Common myeloid progenitor, CD34-positive (primary cell): ENCODE measurements at regions of chr17 and their contacts with region 1.

Region 1: GRCh38 chr17:40559954-40560591 is 5.2 kb downstream of the CCR7 start:
- DNase-seq: peak; percentile 71 to 85 (median 83)
- H3K4me3 ChIP-seq: peak overlapping the region in 3 of 7 experiments; percentile 16 to 57 (median 19)
- H3K27ac ChIP-seq: no peak overlapping the region
- H3K4me1 ChIP-seq: peaks cover 11 to 72% (median 59%) of the 10 kb centered on the region in 4 experiments
- H3K27me3 ChIP-seq: peaks cover 0 to 4% (median 0%) of the 10 kb centered on the region in 5 experiments

Region 2: DNA sequence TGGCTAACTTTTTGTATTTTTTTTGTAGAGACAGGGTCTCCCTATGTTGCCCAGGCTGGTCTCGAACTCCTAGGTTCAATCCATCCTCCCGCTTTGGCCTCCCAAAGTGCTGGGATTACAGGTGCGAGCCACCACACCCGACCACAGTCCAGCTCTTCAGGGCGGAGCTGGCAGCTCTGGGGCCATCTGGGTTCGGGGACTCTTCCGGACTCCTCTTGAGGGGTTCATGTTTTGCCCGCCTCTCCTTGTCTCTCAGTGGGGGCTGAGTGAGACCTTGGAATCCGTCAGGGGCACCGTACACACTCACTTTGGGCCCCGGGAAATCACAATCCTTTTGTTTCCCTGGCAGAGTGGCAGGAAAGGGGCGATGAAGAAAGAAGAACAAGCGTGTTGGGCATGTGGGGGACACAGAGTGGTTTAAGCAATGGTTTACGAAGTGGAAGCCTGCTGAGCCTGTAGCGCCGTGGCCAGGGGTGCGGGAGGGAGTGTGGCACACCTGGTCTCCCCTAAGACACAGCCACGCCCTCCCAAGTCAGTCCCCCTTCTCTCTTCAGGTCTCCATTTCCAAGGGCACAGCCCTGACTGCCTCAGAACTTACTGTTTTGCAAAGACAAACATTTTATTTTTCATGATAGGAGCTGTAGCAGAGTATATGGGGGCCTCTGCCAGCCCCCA is 84.7 kb before region 1 on chr17:
- CTCF ChIA-PET with region 1: interaction called, 14 read pairs
- POLR2A ChIA-PET with region 1: no interaction called
- DNase-seq: no peak
- H3K4me3 ChIP-seq: no peak overlapping the region
- H3K27ac ChIP-seq: no peak overlapping the region
- H3K4me1 ChIP-seq: peaks cover 0 to 12% (median 8%) of the 10 kb centered on the region in 4 experiments
- H3K27me3 ChIP-seq: peaks cover 0 to 2% (median 0%) of the 10 kb centered on the region in 5 experiments

Region 3: GRCh38 chr17:40536295-40537171 is 23.5 kb before region 1 on chr17:
- CTCF ChIA-PET with region 1: interaction called, 401 read pairs
- POLR2A ChIA-PET with region 1: interaction called, 8 read pairs
- DNase-seq: no peak
- H3K4me3 ChIP-seq: no peak overlapping the region
- H3K27ac ChIP-seq: no peak overlapping the region
- H3K4me1 ChIP-seq: peaks cover 6 to 39% (median 17%) of the 10 kb centered on the region in 4 experiments
- H3K27me3 ChIP-seq: no peaks in the 10 kb centered on the region

Region 4: GRCh38 chr17:40582328-40582901 is 22.3 kb after region 1 on chr17:
- CTCF ChIA-PET with region 1: interaction called, 25 read pairs
- POLR2A ChIA-PET with region 1: interaction called, 17 read pairs
- DNase-seq: peak; percentile 82 to 99 (median 97)
- H3K4me3 ChIP-seq: peak overlapping the region in 4 of 7 experiments; percentile 5 to 60 (median 24)
- H3K27ac ChIP-seq: peak overlapping the region; percentile 61 to 76
- H3K4me1 ChIP-seq: peaks cover 15 to 35% (median 26%) of the 10 kb centered on the region in 4 experiments
- H3K27me3 ChIP-seq: no peaks in the 10 kb centered on the region

Region 5: GRCh38 chr17:40615295-40615988 is 55.4 kb after region 1 on chr17:
- CTCF ChIA-PET with region 1: interaction called, 42 read pairs
- POLR2A ChIA-PET with region 1: no interaction called
- DNase-seq: peak; percentile 29 to 39 (median 35)
- H3K4me3 ChIP-seq: no peak overlapping the region
- H3K27ac ChIP-seq: no peak overlapping the region
- H3K4me1 ChIP-seq: peaks cover 0 to 15% (median 9%) of the 10 kb centered on the region in 4 experiments
- H3K27me3 ChIP-seq: peaks cover 0 to 6% (median 0%) of the 10 kb centered on the region in 5 experiments